ENCODE measurements at regions of chr4 and their contacts with region 1.

Region 1: GRCh38 chr4:108324450-108324849 is 155.7 kb upstream of the LEF1 start:
- DNase-seq: no peak
- ATAC-seq: no peak
- H3K4me3 ChIP-seq: no peak overlapping the region
- H3K27ac ChIP-seq: no peak overlapping the region
- H3K4me1 ChIP-seq: no peaks in the 10 kb centered on the region
- H3K27me3 ChIP-seq: peaks cover 24% of the 10 kb centered on the region
- CTCF ChIP-seq: no peak
- POLR2A ChIP-seq: no peak
- RAD21 ChIP-seq: no peak

Region 2: GRCh38 chr4:108375434-108375833 is 51.0 kb after region 1 on chr4:
- CTCF ChIA-PET with region 1: no interaction called
- POLR2A ChIA-PET with region 1: no interaction called
- RAD21 ChIA-PET with region 1: no interaction called
- intact Hi-C with region 1: loop called (anchors 2 kb)
- DNase-seq: no peak
- ATAC-seq: no peak
- H3K4me3 ChIP-seq: no peak overlapping the region
- H3K27ac ChIP-seq: no peak overlapping the region
- H3K4me1 ChIP-seq: no peaks in the 10 kb centered on the region
- H3K27me3 ChIP-seq: peaks cover 48% of the 10 kb centered on the region
- CTCF ChIP-seq: no peak
- POLR2A ChIP-seq: no peak
- RAD21 ChIP-seq: no peak